ENCODE measurements at regions of chr1 and their contacts with region 1.

Region 1: GRCh38 chr1:177274687-177275211 is 104.0 kb downstream of the BRINP2 start:
- DNase-seq: peak in 1 of 2 donors; percentile 78
- H3K4me3 ChIP-seq: no peak overlapping the region
- H3K27ac ChIP-seq: peak overlapping the region; percentile 18 to 35
- H3K4me1 ChIP-seq: peaks cover 0 to 14% of the 10 kb centered on the region in 2 donors
- H3K27me3 ChIP-seq: no peaks in the 10 kb centered on the region
- CTCF ChIP-seq: no peak

Region 2: DNA sequence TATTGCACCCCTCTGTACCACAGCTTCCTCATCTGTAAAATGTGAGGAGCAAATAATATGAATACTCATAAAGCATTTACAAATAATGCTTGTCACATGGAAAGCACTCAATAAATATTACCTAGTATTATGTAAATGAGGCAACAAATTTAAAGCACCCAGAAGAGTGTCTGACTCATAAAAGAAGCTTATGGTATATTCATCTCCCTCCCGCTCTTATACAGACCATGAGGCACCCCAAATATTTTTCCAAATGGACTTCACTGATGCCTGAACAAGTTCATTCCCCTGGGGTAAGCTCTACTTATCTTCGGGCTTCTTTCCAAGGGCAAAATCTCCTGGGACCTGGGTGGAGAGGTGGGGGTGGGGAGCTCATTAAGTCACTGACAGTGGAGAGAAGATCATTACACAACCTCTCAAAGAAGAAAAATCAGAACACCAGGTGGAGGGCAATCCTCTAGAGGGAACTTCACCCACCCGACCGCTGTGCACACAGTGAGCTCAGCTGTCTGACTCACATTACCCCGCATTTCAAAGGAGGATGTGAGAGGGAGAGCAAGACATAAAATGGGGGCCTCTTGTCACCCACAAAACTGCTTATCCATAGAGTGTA is 276.5 kb before region 1 on chr1:
- intact Hi-C with region 1: no loop called
- DNase-seq: no peak
- H3K4me3 ChIP-seq: no peak overlapping the region
- H3K27ac ChIP-seq: no peak overlapping the region
- H3K4me1 ChIP-seq: no peaks in the 10 kb centered on the region
- H3K27me3 ChIP-seq: no peaks in the 10 kb centered on the region
- CTCF ChIP-seq: no peak

Region 3: GRCh38 chr1:177246710-177247580 is 27.8 kb before region 1 on chr1:
- intact Hi-C with region 1: loop called (anchors 2 kb)
- DNase-seq: no peak
- H3K4me3 ChIP-seq: peak overlapping the region in 1 of 2 donors; percentile 30
- H3K27ac ChIP-seq: peak overlapping the region; percentile 38 to 41
- H3K4me1 ChIP-seq: peaks cover 0 to 9% of the 10 kb centered on the region in 2 donors
- H3K27me3 ChIP-seq: no peaks in the 10 kb centered on the region
- CTCF ChIP-seq: no peak